ENCODE measurements at regions of chr6 and their contacts with region 1.

Region 1: DNA sequence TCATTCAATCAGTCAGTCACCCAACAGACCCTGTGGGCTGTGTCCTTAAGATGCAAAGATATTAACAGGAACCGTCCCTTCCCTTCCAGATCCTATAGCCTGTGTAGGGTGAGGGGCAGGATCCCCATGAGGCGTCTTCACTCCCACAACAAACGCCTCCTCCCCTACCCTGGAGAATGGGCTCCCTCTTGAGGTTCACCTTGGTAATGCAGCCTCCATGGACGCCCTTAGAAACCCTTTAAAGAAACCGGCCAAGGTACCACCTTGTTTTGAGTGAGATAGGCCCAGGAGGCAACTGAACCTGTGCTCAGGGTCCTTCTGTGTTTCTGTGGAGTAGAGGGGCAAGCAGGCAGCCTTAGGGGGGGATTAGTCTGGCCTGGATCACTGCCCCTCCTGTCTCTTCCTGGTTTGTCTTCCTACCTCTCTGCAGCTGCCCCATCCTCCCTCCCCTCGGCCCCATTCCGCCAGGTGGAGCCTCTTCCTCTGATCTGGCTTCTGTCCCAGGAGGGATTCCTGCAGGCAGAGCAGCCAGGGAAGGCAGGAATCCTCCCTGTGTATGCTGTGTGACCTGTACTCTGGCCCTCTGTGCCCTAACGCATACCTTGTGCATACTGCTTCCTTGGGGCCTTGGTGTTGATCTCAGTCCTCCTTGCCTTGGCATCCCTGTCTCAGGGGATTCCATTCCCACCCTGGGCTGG is 6.6 kb upstream of the GUCA1A start:
- DNase-seq: peak; percentile 66 to 78 (median 72)
- ATAC-seq: peak; percentile 87
- H3K4me3 ChIP-seq: no peak overlapping the region
- H3K27ac ChIP-seq: no peak overlapping the region
- H3K4me1 ChIP-seq: no peaks in the 10 kb centered on the region
- H3K27me3 ChIP-seq: no peaks in the 10 kb centered on the region
- CTCF ChIP-seq: peak; percentile 85 to 96 (median 95)
- POLR2A ChIP-seq: no peak

Region 2: GRCh38 chr6:42075159-42075838 is 91.3 kb before region 1 on chr6:
- intact Hi-C with region 1: loop called (anchors 2 kb)
- DNase-seq: peak; percentile 76 to 84 (median 79)
- ATAC-seq: peak; percentile 80
- H3K4me3 ChIP-seq: no peak overlapping the region
- H3K27ac ChIP-seq: no peak overlapping the region
- H3K4me1 ChIP-seq: no peaks in the 10 kb centered on the region
- H3K27me3 ChIP-seq: no peaks in the 10 kb centered on the region
- CTCF ChIP-seq: peak; percentile 66 to 92 (median 80)
- POLR2A ChIP-seq: no peak